ENCODE measurements at regions of chr16 and their contacts with region 1.

Region 1: DNA sequence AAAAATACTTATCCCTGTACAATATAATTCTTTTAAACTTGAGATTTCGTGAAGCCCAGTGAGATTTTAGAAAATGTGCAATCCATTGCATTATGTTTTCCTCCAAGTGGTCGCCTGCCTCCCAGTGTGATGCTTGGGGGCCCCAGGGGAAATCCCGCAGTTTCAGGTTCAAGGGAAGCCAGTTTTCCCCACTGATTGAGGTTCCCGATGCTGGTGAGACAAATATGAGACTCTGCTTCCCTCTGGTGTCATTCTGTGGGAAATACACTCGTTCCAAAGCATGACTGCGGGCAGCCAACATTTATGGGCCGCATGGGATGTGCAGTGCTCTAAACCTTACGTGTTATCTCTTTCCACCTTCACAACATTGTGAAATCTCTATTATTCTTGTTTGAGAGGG is 200.8 kb downstream of the PRKCB start:
- DNase-seq: peak; percentile 33
- ATAC-seq: peak; percentile 94
- H3K4me3 ChIP-seq: no peak overlapping the region
- H3K27ac ChIP-seq: no peak overlapping the region
- H3K4me1 ChIP-seq: no peaks in the 10 kb centered on the region
- H3K27me3 ChIP-seq: no peaks in the 10 kb centered on the region; the same call in 1 of the 2 replicates
- CTCF ChIP-seq: peak; percentile 72
- POLR2A ChIP-seq: no peak
- RAD21 ChIP-seq: peak; percentile 83

Region 2: GRCh38 chr16:23556881-23557778 is 479.5 kb before region 1 on chr16 and contains the starts of genes EARS2 and UBFD1:
- CTCF ChIA-PET with region 1: interaction called, 3 read pairs
- POLR2A ChIA-PET with region 1: no interaction called
- dilution Hi-C with region 1: no loop called
- in situ Hi-C with region 1: no loop called
- intact Hi-C with region 1: loop called (anchors 1 kb)
- DNase-seq: peak; percentile 98
- ATAC-seq: peak; percentile 96
- H3K4me3 ChIP-seq: peak within 1 kb of the TSS; percentile 67
- H3K27ac ChIP-seq: peak within 1 kb of the TSS; percentile 80
- H3K4me1 ChIP-seq: no peaks in the 10 kb centered on the region
- H3K27me3 ChIP-seq: no peaks in the 10 kb centered on the region
- CTCF ChIP-seq: peak; percentile 98
- POLR2A ChIP-seq: peak; percentile 94
- RAD21 ChIP-seq: peak; percentile 43
- total RNA-seq, gene EARS2: 23.3 and 28.1 TPM in 2 replicates
- total RNA-seq, gene UBFD1: 39.3 and 48.9 TPM in 2 replicates

Region 3: DNA sequence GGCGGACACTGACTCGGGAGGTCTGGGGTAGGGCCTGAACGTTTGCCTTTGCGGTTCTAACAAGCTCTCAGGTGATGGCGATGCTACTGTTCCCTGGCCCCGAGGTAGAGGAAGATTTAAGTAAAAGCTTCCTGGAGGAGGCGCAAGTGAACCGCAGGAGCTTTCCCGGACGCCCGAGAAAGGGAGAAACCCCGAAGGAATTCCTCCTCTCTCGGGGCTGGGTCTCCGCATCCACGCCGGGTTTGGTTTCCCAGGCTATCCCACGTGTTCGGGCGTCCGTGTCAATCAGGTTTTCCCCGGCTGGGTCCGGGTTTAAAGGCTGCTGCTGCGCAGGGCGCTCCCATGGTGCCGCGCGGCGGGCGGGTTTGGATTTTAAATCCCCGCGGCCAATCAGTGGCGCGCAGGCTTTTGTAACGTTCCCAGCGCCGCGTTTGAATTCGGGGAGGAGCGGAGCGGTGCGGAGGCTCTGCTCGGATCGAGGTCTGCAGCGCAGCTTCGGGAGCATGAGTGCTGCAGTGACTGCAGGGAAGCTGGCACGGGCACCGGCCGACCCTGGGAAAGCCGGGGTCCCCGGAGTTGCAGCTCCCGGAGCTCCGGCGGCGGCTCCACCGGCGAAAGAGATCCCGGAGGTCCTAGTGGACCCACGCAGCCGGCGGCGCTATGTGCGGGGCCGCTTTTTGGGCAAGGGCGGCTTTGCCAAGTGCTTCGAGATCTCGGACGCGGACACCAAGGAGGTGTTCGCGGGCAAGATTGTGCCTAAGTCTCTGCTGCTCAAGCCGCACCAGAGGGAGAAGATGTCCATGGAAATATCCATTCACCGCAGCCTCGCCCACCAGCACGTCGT is 358.0 kb before region 1 on chr16 and contains the start of gene PLK1:
- CTCF ChIA-PET with region 1: no interaction called
- POLR2A ChIA-PET with region 1: no interaction called
- dilution Hi-C with region 1: no loop called
- in situ Hi-C with region 1: no loop called
- intact Hi-C with region 1: loop called (anchors 2 kb)
- DNase-seq: peak; percentile 76
- ATAC-seq: peak; percentile 93
- H3K4me3 ChIP-seq: peak within 1 kb of the TSS; percentile 50
- H3K27ac ChIP-seq: peak within 1 kb of the TSS; percentile 64
- H3K4me1 ChIP-seq: peaks cover 19% of the 10 kb centered on the region
- H3K27me3 ChIP-seq: no peaks in the 10 kb centered on the region
- CTCF ChIP-seq: peak; percentile 50
- POLR2A ChIP-seq: no peak
- RAD21 ChIP-seq: peak; percentile 44
- total RNA-seq, gene PLK1: 19.4 and 20.0 TPM in 2 replicates

Region 4: DNA sequence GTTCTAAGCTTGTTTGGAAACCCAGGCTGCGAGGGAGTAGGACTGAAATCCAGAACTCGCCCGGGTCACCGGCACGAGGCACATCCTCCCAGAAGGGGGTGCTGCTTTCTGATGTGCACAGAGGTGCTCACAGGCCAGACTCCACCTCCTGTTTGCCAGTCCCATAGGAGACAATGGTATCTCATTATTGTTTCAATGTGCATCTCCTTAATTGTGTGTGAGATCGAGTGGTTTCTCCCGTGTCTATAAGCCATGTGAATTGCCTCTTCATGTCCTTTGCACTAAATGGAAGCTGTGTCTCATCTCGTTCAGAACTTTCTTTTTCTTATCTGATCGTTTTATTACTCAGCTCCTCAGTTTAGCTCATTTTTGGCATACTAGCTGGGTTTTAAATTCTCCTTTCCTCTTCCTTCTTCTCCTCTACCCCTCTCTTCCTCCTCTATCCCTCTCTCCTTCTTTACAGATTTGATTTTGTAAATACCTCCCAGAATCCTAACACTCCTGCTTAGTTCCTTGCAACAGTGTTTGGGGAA is 233.0 kb before region 1 on chr16:
- CTCF ChIA-PET with region 1: interaction called, 4 read pairs
- POLR2A ChIA-PET with region 1: no interaction called
- dilution Hi-C with region 1: no loop called
- in situ Hi-C with region 1: no loop called
- intact Hi-C with region 1: loop called (anchors 1 kb)
- DNase-seq: peak; percentile 8
- ATAC-seq: peak; percentile 86
- H3K4me3 ChIP-seq: no peak overlapping the region; the same call in 1 of the 2 replicates
- H3K27ac ChIP-seq: no peak overlapping the region
- H3K4me1 ChIP-seq: no peaks in the 10 kb centered on the region
- H3K27me3 ChIP-seq: no peaks in the 10 kb centered on the region
- CTCF ChIP-seq: peak; percentile 42
- POLR2A ChIP-seq: no peak
- RAD21 ChIP-seq: peak; percentile 36